Astrocyte of the cerebellum (primary cell): ENCODE measurements at regions of chr1 and their contacts with region 1.

Region 1: GRCh38 chr1:17350083-17350482 is 21.9 kb upstream of the PADI6 start:
- DNase-seq: no peak
- H3K4me3 ChIP-seq: no peak overlapping the region
- CTCF ChIP-seq: no peak

Region 2: GRCh38 chr1:17287130-17287776 is 62.8 kb before region 1 on chr1:
- in situ Hi-C with region 1: loop called (anchors 5 kb)
- DNase-seq: peak; percentile 43
- H3K4me3 ChIP-seq: no peak overlapping the region
- CTCF ChIP-seq: no peak

Region 3: DNA sequence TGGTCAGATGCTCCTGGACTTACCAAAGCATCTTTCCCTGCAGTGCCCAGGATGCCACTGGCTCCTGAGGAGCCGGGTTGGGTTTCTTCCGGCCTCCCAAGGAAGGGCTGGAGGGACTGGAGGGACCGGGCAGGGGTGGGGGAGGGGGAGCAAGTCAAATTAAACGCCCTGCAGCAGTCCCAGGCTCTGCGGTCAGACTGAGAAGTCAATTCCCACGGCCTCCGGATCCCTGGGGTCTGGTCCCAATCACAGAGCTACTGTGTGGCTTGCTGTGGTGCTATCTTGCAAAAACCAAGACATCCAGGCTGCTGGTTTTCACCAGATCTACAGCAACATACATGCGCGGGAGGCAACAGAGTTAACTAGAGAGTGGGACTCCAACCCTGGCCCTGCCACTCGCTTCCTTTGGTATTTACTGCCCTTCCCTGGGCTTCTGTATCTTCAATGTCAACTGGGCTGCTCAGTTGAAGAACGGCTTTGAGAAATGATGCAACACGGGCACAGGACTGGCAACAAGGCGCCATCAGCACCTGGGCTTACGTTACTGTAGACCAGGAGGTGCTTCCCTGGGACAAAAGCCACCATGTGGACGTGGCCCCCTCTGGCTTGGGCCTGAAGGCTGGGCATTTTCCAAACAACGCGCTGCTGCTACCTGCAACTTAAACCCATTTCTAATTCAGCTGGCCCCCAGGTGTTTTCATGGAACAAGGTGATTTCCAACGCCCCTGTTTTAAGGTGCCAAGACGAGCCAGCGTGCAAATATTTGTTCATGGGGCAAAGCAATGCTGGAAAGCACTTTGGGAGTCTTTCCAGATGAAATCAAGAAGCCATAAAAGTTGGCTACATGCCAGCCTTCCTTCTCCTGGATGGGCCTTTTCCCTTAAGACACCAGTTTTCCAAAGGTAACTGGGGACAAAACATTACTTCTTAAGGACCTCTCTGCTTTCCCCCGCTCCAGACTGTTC is 77.9 kb after region 1 on chr1:
- in situ Hi-C with region 1: no loop called
- DNase-seq: no peak
- H3K4me3 ChIP-seq: no peak overlapping the region
- CTCF ChIP-seq: no peak